ENCODE measurements at regions of chr1 and their contacts with region 1.

Region 1: GRCh38 chr1:29341936-29342335 is 105.6 kb downstream of the PTPRU start:
- DNase-seq: no peak
- ATAC-seq: no peak
- H3K4me3 ChIP-seq: no peak overlapping the region
- H3K27ac ChIP-seq: no peak overlapping the region
- H3K4me1 ChIP-seq: no peaks in the 10 kb centered on the region
- H3K27me3 ChIP-seq: peaks cover 22% of the 10 kb centered on the region
- CTCF ChIP-seq: peak; percentile 53

Region 2: DNA sequence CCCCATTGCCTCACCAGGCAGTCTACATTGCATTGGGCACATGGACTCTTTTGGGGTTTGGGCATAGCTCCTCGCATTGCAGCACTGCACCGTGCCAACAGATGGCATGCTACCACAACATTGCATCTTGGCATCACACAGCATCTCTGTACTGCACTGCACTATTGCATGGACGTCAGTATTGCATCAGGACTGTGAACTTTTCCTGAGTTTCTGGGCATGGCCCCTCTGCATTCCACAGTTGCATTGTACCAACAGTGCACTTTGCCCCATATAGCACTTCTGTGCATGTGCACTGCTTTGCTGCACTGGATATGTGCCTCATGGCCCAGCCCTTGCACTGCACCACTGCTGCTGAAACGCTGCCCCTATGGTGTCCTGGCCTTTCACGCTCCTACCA is 96.1 kb before region 1 on chr1:
- CTCF ChIA-PET with region 1: interaction called, 5 read pairs
- POLR2A ChIA-PET with region 1: no interaction called
- in situ Hi-C with region 1: no loop called
- intact Hi-C with region 1: loop called (anchors 10 kb)
- DNase-seq: peak; percentile 24
- ATAC-seq: peak; percentile 75
- H3K4me3 ChIP-seq: no peak overlapping the region
- H3K27ac ChIP-seq: no peak overlapping the region
- H3K4me1 ChIP-seq: no peaks in the 10 kb centered on the region
- H3K27me3 ChIP-seq: no peaks in the 10 kb centered on the region
- CTCF ChIP-seq: peak; percentile 74; the same call in 1 of the 2 replicates

Region 3: GRCh38 chr1:29324771-29325668 is 16.9 kb before region 1 on chr1:
- CTCF ChIA-PET with region 1: no interaction called
- POLR2A ChIA-PET with region 1: no interaction called
- in situ Hi-C with region 1: no loop called
- intact Hi-C with region 1: no loop called
- DNase-seq: no peak
- ATAC-seq: no peak
- H3K4me3 ChIP-seq: no peak overlapping the region
- H3K27ac ChIP-seq: no peak overlapping the region
- H3K4me1 ChIP-seq: no peaks in the 10 kb centered on the region
- H3K27me3 ChIP-seq: no peaks in the 10 kb centered on the region
- CTCF ChIP-seq: no peak

Region 4: GRCh38 chr1:29542548-29542947 is 200.6 kb after region 1 on chr1:
- CTCF ChIA-PET with region 1: no interaction called
- POLR2A ChIA-PET with region 1: no interaction called
- in situ Hi-C with region 1: no loop called
- intact Hi-C with region 1: no loop called
- DNase-seq: no peak
- ATAC-seq: no peak
- H3K4me3 ChIP-seq: no peak overlapping the region
- H3K27ac ChIP-seq: no peak overlapping the region
- H3K4me1 ChIP-seq: no peaks in the 10 kb centered on the region
- H3K27me3 ChIP-seq: no peaks in the 10 kb centered on the region
- CTCF ChIP-seq: no peak